ENCODE measurements at regions of chr10 and their contacts with region 1.

Region 1: DNA sequence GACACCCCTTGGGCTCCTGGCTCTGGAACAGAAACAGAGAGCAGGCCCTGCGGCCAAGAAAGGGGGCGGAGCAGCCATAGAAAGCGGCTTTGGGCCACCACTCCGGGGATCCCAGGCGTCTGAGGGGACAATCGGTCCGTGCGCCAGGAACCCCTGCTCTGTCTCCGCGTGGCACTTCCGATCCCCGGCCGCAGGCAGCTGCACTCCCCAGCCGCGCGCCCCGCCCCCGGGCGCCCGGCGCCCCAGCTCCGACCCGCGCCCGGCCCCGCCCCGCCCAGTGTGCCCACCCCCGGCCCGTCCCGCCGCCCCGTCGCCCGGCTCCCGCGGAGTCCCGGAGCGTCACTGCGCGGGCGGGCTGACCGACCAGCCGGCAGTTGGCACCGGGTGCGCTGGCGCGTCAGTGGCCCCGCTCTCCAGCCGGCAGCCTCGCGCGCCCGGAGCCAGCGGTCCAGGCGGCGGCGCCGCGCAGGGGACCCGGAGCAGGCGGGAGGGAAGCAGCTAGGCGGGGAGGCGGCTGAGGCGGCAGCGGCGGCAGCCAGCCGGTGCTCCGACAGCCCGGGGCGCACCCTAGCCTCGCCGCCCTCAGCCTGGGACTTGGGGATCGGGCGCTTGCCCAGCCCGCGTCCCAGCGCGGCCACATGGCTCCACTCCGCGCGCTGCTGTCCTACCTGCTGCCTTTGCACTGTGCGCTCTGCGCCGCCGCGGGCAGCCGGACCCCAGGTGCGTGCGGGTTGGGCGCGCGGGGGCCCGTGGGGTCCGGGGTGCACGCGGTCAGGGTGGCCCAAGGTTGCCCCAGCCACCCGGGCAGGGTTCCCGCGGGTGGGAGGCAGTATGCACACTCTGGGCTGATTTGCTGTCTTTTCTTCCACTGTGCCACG is at the start of gene ADAMTS14:
- DNase-seq: peak in 2 of 14 experiments; percentile 7 to 10
- ATAC-seq: no peak
- H3K4me3 ChIP-seq: no peak within 1 kb of the TSS
- H3K4me3 Mint-ChIP-seq: no peak within 1 kb of the TSS
- H3K27ac ChIP-seq: no peak within 1 kb of the TSS
- H3K27ac Mint-ChIP-seq: no peak within 1 kb of the TSS
- H3K4me1 ChIP-seq: no peaks in the 10 kb centered on the region
- H3K4me1 Mint-ChIP-seq: peaks cover 8% of the 10 kb centered on the region
- H3K27me3 ChIP-seq: peaks cover 24 to 40% of the 10 kb centered on the region in 2 experiments
- H3K27me3 Mint-ChIP-seq: peaks cover 40% of the 10 kb centered on the region
- CTCF ChIP-seq: no peak
- total RNA-seq, gene ADAMTS14: not detected

Region 2: DNA sequence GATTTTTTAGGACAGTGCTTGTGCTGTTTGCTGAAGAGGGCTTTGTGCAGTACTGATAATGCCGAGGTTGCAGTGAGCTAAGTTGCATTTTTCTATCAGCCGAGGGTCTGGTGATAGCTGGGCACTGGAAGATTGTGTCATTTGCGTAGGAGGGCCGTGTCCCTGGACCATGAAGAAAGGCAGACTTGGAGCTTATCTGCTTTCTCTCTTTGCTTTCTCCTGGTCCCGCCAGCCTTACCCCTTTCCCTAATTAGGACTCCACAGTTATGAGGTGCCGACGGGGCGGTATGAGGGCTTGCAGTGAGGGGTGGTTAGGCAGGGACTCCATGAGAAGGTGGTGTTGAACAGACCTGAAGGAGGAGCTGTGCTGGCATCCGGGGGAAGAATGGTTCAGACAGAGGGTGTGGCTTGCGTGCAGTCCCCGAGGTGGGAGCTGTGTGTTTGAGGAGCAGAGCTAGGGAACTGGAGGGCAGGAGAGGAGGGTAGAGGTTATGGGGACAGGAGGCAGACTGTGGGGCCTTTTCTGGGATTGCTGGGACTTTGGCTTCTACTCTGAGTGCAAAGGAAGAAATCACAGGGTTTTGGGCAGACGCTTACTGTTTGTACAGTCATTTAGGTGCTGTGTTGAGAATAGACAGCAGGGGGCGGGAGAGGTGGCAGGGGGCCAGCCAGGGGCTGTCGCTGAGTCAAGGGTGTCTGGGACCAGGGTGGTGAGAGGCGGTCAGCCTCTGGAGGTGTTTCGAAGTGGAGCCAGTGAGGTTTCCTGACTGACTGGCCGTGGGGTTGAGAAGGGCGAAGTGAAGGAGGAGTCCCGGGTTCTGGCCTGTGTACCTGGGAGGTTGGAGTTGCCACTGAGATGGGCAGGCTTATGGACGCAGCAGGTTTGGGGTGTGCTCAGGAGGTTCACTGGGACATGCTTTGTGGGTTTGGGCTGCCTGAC is 113.3 kb before region 1 on chr10:
- CTCF ChIA-PET with region 1: no interaction called
- POLR2A ChIA-PET with region 1: no interaction called
- intact Hi-C with region 1: loop called in 1 of 2 experiments (anchors 10 kb)
- DNase-seq: peak; percentile 38 to 75 (median 58)
- ATAC-seq: peak; percentile 95
- H3K4me3 ChIP-seq: peak overlapping the region; percentile 52
- H3K4me3 Mint-ChIP-seq: peak overlapping the region; percentile 64
- H3K27ac ChIP-seq: no peak overlapping the region
- H3K27ac Mint-ChIP-seq: no peak overlapping the region
- H3K4me1 ChIP-seq: peaks cover 9% of the 10 kb centered on the region
- H3K4me1 Mint-ChIP-seq: peaks cover 9% of the 10 kb centered on the region
- H3K27me3 ChIP-seq: no peaks in the 10 kb centered on the region
- H3K27me3 Mint-ChIP-seq: no peaks in the 10 kb centered on the region
- CTCF ChIP-seq: peak; percentile 53